CD8-positive, alpha-beta T cell (primary cell): ENCODE measurements at regions of chr5 and their contacts with region 1.

Region 1: GRCh38 chr5:151223469-151224264 is at the start of gene CCDC69:
- DNase-seq: peak in 8 of 9 experiments; percentile 34 to 78 (median 58)
- ATAC-seq: peak; percentile 47
- H3K4me3 ChIP-seq: peak within 1 kb of the TSS; percentile 67 to 95
- H3K4me3 Mint-ChIP-seq: peak within 1 kb of the TSS; percentile 89
- H3K27ac ChIP-seq: peak within 1 kb of the TSS; percentile 69 to 86
- H3K27ac Mint-ChIP-seq: peak within 1 kb of the TSS; percentile 96
- H3K4me1 ChIP-seq: peaks cover 58% of the 10 kb centered on the region
- H3K4me1 Mint-ChIP-seq: peaks cover 58% of the 10 kb centered on the region
- H3K27me3 ChIP-seq: no peaks in the 10 kb centered on the region
- H3K27me3 Mint-ChIP-seq: no peaks in the 10 kb centered on the region
- CTCF ChIP-seq: no peak
- total RNA-seq, gene CCDC69: 96.3 to 98.5 TPM

Region 2: DNA sequence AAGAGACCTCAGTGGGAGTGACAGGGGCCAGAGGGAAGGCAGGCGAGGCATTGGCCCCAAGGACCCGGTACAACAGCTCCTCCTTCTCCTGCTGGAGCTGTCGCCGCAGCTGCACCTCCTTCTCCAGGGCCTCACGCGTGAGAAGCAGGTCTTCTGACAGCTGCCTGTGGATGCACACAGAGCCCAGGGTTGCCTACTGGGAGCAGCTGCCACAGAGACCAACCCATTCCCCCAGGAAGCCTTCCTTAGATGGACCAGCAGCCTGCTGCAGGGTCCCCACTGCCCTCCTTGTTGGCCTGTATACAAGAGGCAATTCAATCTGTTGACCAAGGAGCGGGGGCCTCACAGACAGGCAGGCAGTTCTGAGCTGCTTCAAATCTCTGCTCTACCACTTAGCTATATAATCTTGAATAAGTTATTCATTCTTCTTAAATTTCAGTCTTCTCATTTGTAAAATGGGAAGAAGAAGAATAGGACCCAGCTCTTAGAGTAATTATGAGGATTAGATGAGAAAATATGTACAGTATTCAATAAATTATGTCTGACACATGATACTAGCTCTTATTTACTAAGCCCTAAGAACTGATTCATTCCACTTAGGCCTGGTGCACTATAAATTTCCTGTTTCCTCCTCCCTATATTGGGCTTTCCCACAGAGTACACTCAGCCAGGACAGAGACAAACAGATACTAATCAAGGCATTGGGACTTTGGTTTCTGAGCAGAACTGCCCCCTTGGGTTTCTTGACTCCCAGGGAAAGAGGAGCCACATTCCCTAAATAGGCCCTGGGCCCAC is 40.0 kb before region 1 on chr5:
- CTCF ChIA-PET with region 1: interaction called, 7 read pairs
- POLR2A ChIA-PET with region 1: no interaction called
- intact Hi-C with region 1: loop called in 1 of 2 experiments (anchors 5 kb)
- DNase-seq: no peak
- ATAC-seq: no peak
- H3K4me3 ChIP-seq: no peak overlapping the region
- H3K4me3 Mint-ChIP-seq: no peak overlapping the region
- H3K27ac ChIP-seq: no peak overlapping the region
- H3K27ac Mint-ChIP-seq: peak overlapping the region; percentile 14
- H3K4me1 ChIP-seq: no peaks in the 10 kb centered on the region
- H3K4me1 Mint-ChIP-seq: peaks cover 23% of the 10 kb centered on the region
- H3K27me3 ChIP-seq: no peaks in the 10 kb centered on the region
- H3K27me3 Mint-ChIP-seq: no peaks in the 10 kb centered on the region
- CTCF ChIP-seq: no peak